ENCODE measurements at regions of chr17 and their contacts with region 1.

Region 1: DNA sequence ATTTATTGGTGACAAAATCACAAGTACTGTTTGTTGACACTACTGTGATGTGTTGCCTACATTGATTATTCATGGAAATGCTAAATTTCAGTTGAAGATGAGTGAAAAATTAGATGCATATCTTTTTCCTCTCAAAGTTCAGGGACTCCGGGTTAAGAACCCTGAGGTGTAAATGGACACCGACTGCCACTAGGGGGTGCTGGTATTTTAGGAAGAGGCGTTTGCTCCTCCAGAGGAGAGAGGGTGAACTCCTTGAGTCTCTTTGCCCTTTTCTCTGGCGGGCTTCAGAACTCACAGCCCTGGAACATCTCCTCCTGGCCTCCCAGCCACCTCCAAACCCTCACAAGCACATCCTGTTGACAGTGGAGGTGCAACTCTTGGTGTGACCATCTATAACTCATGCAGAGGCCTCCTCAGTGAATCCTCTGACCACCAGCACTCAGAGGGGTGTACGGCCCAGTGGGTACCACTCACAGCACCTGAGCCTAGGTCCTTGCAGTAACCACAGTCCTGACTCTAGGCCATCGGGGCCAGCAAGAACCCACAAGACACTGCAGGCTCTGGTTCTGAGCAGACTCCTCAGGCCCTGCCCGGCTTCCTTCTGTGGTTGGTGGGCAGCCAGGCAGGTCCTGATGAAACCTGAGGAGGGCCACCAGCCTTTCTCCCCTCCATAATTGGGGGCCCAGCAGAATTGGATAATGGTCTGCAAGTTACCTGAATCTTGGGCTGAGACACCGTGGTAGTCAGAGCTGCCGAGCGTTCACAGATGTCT is 26.2 kb upstream of the PIK3R5 start:
- DNase-seq: peak; percentile 31 to 81 (median 71)
- ATAC-seq: peak; percentile 80
- H3K4me3 ChIP-seq: no peak overlapping the region
- H3K4me3 Mint-ChIP-seq: no peak overlapping the region
- H3K27ac ChIP-seq: no peak overlapping the region
- H3K27ac Mint-ChIP-seq: no peak overlapping the region
- H3K4me1 ChIP-seq: peaks cover 9% of the 10 kb centered on the region
- H3K4me1 Mint-ChIP-seq: peaks cover 7% of the 10 kb centered on the region
- H3K27me3 ChIP-seq: no peaks in the 10 kb centered on the region
- H3K27me3 Mint-ChIP-seq: no peaks in the 10 kb centered on the region
- CTCF ChIP-seq: peak; percentile 73

Region 2: GRCh38 chr17:8935191-8935590 is 56.5 kb before region 1 on chr17:
- CTCF ChIA-PET with region 1: no interaction called
- POLR2A ChIA-PET with region 1: no interaction called
- intact Hi-C with region 1: loop called in 1 of 2 experiments (anchors 5 kb)
- DNase-seq: peak in 5 of 9 experiments; percentile 52 to 92 (median 72)
- ATAC-seq: peak; percentile 64
- H3K4me3 ChIP-seq: no peak overlapping the region
- H3K4me3 Mint-ChIP-seq: peak overlapping the region; percentile 4
- H3K27ac ChIP-seq: peak overlapping the region in 1 of 2 experiments; percentile 81
- H3K27ac Mint-ChIP-seq: peak overlapping the region; percentile 88
- H3K4me1 ChIP-seq: peaks cover 42% of the 10 kb centered on the region
- H3K4me1 Mint-ChIP-seq: peaks cover 75% of the 10 kb centered on the region
- H3K27me3 ChIP-seq: no peaks in the 10 kb centered on the region
- H3K27me3 Mint-ChIP-seq: no peaks in the 10 kb centered on the region
- CTCF ChIP-seq: no peak

Region 3: GRCh38 chr17:9522074-9522473 is 530.4 kb after region 1 on chr17:
- CTCF ChIA-PET with region 1: no interaction called
- POLR2A ChIA-PET with region 1: no interaction called
- intact Hi-C with region 1: loop called (anchors 5 to 10 kb)
- DNase-seq: peak in 2 of 9 experiments; percentile 37 to 42
- ATAC-seq: no peak
- H3K4me3 ChIP-seq: no peak overlapping the region
- H3K4me3 Mint-ChIP-seq: no peak overlapping the region
- H3K27ac ChIP-seq: no peak overlapping the region
- H3K27ac Mint-ChIP-seq: no peak overlapping the region
- H3K4me1 ChIP-seq: peaks cover 9% of the 10 kb centered on the region
- H3K4me1 Mint-ChIP-seq: peaks cover 19% of the 10 kb centered on the region
- H3K27me3 ChIP-seq: no peaks in the 10 kb centered on the region
- H3K27me3 Mint-ChIP-seq: no peaks in the 10 kb centered on the region
- CTCF ChIP-seq: no peak